Mammary epithelial cell (primary cell): ENCODE measurements at regions of chr14 and their contacts with region 1.

Region 1: GRCh38 chr14:66575939-66576338 is 68.0 kb downstream of the GPHN start:
- DNase-seq: no peak
- H3K4me3 ChIP-seq: no peak overlapping the region
- H3K27ac ChIP-seq: no peak overlapping the region
- H3K4me1 ChIP-seq: no peaks in the 10 kb centered on the region
- H3K27me3 ChIP-seq: no peaks in the 10 kb centered on the region
- CTCF ChIP-seq: no peak

Region 2: GRCh38 chr14:66507722-66508546 is 68.0 kb before region 1 on chr14 and contains the start of gene GPHN:
- CTCF ChIA-PET with region 1: interaction called, 23 read pairs
- dilution Hi-C with region 1: no loop called
- in situ Hi-C with region 1: no loop called
- intact Hi-C with region 1: no loop called
- DNase-seq: peak; percentile 99
- H3K4me3 ChIP-seq: peak within 1 kb of the TSS; percentile 90 to 99 (median 95)
- H3K27ac ChIP-seq: peak within 1 kb of the TSS; percentile 68
- H3K4me1 ChIP-seq: peaks cover 10% of the 10 kb centered on the region
- H3K27me3 ChIP-seq: no peaks in the 10 kb centered on the region
- CTCF ChIP-seq: peak in 1 of 2 donors; percentile 44
- total RNA-seq, gene GPHN: 10.8 to 30.2 TPM

Region 3: DNA sequence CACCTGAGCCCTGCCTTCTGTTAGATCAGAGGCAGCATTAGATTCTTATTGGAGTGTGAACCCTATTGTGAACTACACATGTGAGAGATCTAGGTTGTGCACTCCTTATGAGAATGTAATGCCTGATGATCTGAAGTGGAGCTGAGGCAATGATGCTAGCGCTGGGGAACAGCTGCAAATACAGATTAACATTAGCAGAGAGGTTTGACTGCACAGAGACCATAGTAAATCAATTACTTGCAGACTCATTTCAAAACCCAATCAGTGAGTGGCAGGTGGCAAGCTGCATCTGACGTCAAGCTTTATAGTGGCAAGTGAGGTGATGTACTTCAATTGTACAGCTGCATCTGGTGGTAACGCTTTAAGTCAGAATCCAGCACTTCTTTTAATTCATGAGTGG is 73.6 kb after region 1 on chr14:
- CTCF ChIA-PET with region 1: no interaction called
- dilution Hi-C with region 1: no loop called
- in situ Hi-C with region 1: no loop called
- intact Hi-C with region 1: no loop called
- DNase-seq: no peak
- H3K4me3 ChIP-seq: no peak overlapping the region
- H3K27ac ChIP-seq: peak overlapping the region; percentile 52
- H3K4me1 ChIP-seq: peaks cover 35% of the 10 kb centered on the region
- H3K27me3 ChIP-seq: no peaks in the 10 kb centered on the region
- CTCF ChIP-seq: no peak